Breast epithelium (tissue), 4 donors: ENCODE measurements at regions of chr6 and their contacts with region 1.

Region 1: DNA sequence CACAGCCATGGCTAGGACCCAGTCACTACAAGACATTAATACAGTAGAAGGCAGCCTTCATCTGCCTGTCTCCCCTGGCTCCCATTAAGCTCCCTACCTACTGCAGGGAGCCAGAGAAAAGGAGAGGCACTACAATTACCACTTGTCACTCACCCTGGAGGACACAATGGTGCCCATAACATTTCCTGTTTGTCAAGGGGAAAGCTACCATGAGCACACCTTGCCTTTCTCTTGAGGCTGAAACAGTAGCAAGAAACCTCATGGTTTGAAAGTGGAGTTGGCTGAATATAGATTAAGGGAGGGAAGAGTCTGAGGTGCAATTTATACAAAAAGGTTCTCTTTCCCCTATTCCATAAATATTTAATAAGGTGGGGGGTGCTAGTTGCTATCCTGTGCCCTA is 27.9 kb downstream of the STK38 start:
- DNase-seq: no peak
- H3K4me3 ChIP-seq: no peak overlapping the region
- H3K27ac ChIP-seq: no peak overlapping the region
- H3K4me1 ChIP-seq: peaks cover 0 to 6% of the 10 kb centered on the region in 2 donors
- H3K27me3 ChIP-seq: no peaks in the 10 kb centered on the region
- CTCF ChIP-seq: no peak
- POLR2A ChIP-seq: no peak

Region 2: DNA sequence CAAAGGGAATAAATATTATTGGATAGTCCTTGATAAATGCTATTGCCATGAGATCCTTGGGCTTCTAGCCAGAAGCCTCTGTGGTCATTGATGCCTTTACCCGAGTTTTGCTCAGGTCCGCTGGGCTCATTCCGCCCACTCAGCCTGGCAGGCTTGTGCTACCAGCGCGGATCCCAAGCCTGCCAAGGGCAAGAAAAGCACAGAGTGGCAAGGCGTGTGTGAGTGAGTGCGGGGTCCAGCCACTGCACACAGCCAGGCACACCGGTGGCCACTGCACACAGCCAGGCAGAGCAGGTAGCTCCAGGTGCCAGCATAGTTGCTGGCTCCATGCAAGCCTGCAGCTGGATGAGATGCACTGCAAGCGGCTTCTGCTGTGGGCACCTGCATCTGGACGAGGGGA is 10.8 kb before region 1 on chr6:
- intact Hi-C with region 1: loop called (anchors 1 kb)
- DNase-seq: no peak
- H3K4me3 ChIP-seq: no peak overlapping the region
- H3K27ac ChIP-seq: no peak overlapping the region
- H3K4me1 ChIP-seq: no peaks in the 10 kb centered on the region
- H3K27me3 ChIP-seq: no peaks in the 10 kb centered on the region
- CTCF ChIP-seq: no peak
- POLR2A ChIP-seq: no peak

Region 3: DNA sequence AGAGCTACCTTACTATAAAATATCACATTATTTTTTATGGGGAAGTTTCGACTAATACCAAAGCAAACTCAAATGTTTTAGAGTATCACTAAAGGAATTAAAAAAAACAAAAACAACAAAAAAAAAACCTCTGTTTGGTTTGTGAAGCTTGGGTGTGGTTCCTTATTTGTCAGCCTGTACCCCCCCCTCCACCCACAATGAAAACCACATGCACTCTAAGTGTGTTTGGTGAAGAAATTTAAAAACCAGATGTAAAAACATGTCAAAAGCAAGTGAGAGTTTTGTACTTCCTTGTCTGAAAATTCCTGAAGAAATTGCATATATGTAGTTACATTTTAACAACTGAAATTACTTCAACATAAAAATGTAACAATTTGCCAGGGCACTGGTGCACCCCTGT is 24.9 kb after region 1 on chr6:
- intact Hi-C with region 1: no loop called
- DNase-seq: no peak
- H3K4me3 ChIP-seq: peak overlapping the region; percentile 9 to 35 (median 16)
- H3K27ac ChIP-seq: peak overlapping the region; percentile 23 to 36
- H3K4me1 ChIP-seq: peaks cover 0 to 16% of the 10 kb centered on the region in 2 donors
- H3K27me3 ChIP-seq: no peaks in the 10 kb centered on the region
- CTCF ChIP-seq: no peak
- POLR2A ChIP-seq: no peak

Region 4: DNA sequence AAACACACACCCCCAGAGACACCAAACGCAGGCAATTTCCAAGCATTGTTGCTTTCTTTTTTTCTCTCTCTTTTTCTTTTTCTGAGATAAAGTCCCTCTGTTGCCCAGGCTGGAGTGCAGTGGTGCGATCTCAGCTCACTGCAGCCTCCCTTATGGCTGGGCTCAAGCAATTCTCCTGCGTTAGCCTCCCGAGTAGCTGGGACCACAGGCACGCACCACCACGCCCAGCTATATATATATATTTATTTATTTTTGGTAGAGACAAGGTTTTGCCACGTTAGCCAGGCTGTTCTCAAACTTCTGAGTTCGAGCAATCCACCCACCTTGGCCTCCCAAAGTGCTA is 60.8 kb after region 1 on chr6:
- intact Hi-C with region 1: no loop called
- DNase-seq: no peak
- H3K4me3 ChIP-seq: peak overlapping the region in 1 of 3 donors; percentile 35
- H3K27ac ChIP-seq: peak overlapping the region; percentile 87 to 95
- H3K4me1 ChIP-seq: peaks cover 0 to 22% of the 10 kb centered on the region in 2 donors
- H3K27me3 ChIP-seq: no peaks in the 10 kb centered on the region
- CTCF ChIP-seq: no peak
- POLR2A ChIP-seq: no peak